ENCODE measurements at regions of chr15 and their contacts with region 1.

Region 1: GRCh38 chr15:36883713-36884517 is 216.4 kb downstream of the MEIS2 start:
- DNase-seq: no peak
- H3K4me3 ChIP-seq: peak overlapping the region; percentile 41 to 49 (median 48)
- H3K27ac ChIP-seq: peak overlapping the region; percentile 42 to 71 (median 58)
- H3K4me1 ChIP-seq: peaks cover 7 to 58% (median 49%) of the 10 kb centered on the region in 4 donors
- H3K27me3 ChIP-seq: peaks cover 0 to 27% (median 10%) of the 10 kb centered on the region in 4 donors
- CTCF ChIP-seq: peak; percentile 85 to 92 (median 85)
- EP300 ChIP-seq: no peak
- POLR2A ChIP-seq: no peak

Region 2: GRCh38 chr15:36501063-36501678 is 382.7 kb before region 1 on chr15:
- intact Hi-C with region 1: loop called (anchors 2 kb)
- DNase-seq: no peak
- H3K4me3 ChIP-seq: no peak overlapping the region
- H3K27ac ChIP-seq: peak overlapping the region in 1 of 4 donors; percentile 16
- H3K4me1 ChIP-seq: peaks cover 8 to 36% (median 25%) of the 10 kb centered on the region in 4 donors
- H3K27me3 ChIP-seq: no peaks in the 10 kb centered on the region
- CTCF ChIP-seq: peak; percentile 70 to 75 (median 72)
- EP300 ChIP-seq: no peak
- POLR2A ChIP-seq: no peak

Region 3: DNA sequence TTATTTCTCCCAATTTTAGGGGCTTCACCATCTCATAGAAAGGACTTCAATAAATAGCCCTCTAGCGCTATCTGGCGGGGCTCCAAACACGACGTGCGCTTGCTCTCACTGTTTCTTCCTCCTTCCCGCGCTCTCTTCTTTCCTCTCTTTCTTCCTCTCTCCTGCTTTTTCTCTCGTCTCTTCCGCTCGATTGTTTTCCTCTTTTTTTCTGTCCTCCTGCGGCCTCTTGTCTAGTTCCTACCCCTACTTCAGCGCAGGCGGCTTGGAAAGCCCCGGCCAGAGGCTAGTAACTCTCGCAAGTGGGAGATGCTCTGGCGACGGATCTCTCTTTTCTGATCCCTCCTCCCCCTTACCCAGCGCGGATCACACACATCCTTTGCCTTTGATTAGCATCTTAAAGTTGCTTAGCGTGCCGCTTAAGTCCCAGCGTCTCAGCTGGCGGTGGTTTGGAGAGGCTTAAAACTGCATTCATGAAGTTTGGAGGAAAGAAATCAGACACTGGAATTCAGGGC is 222.6 kb after region 1 on chr15:
- intact Hi-C with region 1: loop called (anchors 2 kb)
- DNase-seq: no peak
- H3K4me3 ChIP-seq: peak overlapping the region; percentile 52 to 80 (median 56)
- H3K27ac ChIP-seq: peak overlapping the region; percentile 86 to 98 (median 92)
- H3K4me1 ChIP-seq: peaks cover 5 to 45% (median 30%) of the 10 kb centered on the region in 4 donors
- H3K27me3 ChIP-seq: peaks cover 0 to 8% (median 2%) of the 10 kb centered on the region in 4 donors
- CTCF ChIP-seq: peak; percentile 11 to 31 (median 17)
- EP300 ChIP-seq: no peak
- POLR2A ChIP-seq: no peak

Region 4: DNA sequence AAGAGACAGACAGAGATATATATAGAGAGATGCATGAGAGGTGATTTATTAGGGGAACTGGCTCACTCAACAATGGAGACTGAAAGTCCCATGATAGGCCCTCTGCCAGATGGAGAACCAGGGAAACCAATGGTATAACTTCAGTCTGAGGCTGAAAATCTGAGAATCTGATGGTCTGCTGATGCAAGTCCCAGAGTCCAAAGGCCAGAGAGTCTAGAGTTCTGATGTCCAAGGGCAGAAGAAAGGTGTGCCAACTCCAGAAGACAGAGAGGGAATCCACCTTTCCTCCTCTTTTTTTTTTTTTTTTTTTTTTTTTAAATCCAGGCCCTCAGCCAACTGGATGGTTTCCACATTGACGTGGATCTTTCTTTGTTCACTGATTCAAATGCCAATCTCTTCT is 414.4 kb after region 1 on chr15:
- intact Hi-C with region 1: no loop called
- DNase-seq: no peak
- H3K4me3 ChIP-seq: no peak overlapping the region
- H3K27ac ChIP-seq: no peak overlapping the region
- H3K4me1 ChIP-seq: no peaks in the 10 kb centered on the region
- H3K27me3 ChIP-seq: no peaks in the 10 kb centered on the region
- CTCF ChIP-seq: no peak
- EP300 ChIP-seq: no peak
- POLR2A ChIP-seq: no peak

Measured in esophagus muscularis mucosa (tissue), 4 donors.